CD8-positive, alpha-beta T cell (primary cell): ENCODE measurements at regions of chr3 and their contacts with region 1.

Region 1: GRCh38 chr3:107704477-107704876 is 181.7 kb downstream of the BBX start:
- DNase-seq: no peak
- ATAC-seq: no peak
- H3K4me3 ChIP-seq: no peak overlapping the region
- H3K4me3 Mint-ChIP-seq: no peak overlapping the region
- H3K27ac ChIP-seq: no peak overlapping the region
- H3K27ac Mint-ChIP-seq: peak overlapping the region; percentile 34
- H3K4me1 ChIP-seq: no peaks in the 10 kb centered on the region
- H3K4me1 Mint-ChIP-seq: peaks cover 31% of the 10 kb centered on the region
- H3K27me3 ChIP-seq: no peaks in the 10 kb centered on the region
- H3K27me3 Mint-ChIP-seq: no peaks in the 10 kb centered on the region
- CTCF ChIP-seq: no peak

Region 2: GRCh38 chr3:107690522-107691138 is 13.8 kb before region 1 on chr3:
- CTCF ChIA-PET with region 1: interaction called, 12 read pairs
- POLR2A ChIA-PET with region 1: no interaction called
- intact Hi-C with region 1: no loop called
- DNase-seq: peak in 3 of 9 experiments; percentile 8 to 70 (median 59)
- ATAC-seq: peak; percentile 81
- H3K4me3 ChIP-seq: no peak overlapping the region
- H3K4me3 Mint-ChIP-seq: no peak overlapping the region
- H3K27ac ChIP-seq: no peak overlapping the region
- H3K27ac Mint-ChIP-seq: no peak overlapping the region
- H3K4me1 ChIP-seq: peaks cover 3% of the 10 kb centered on the region
- H3K4me1 Mint-ChIP-seq: peaks cover 23% of the 10 kb centered on the region
- H3K27me3 ChIP-seq: no peaks in the 10 kb centered on the region
- H3K27me3 Mint-ChIP-seq: no peaks in the 10 kb centered on the region
- CTCF ChIP-seq: peak; percentile 71

Region 3: GRCh38 chr3:107999215-107999775 is 294.8 kb after region 1 on chr3:
- CTCF ChIA-PET with region 1: no interaction called
- POLR2A ChIA-PET with region 1: no interaction called
- intact Hi-C with region 1: no loop called
- DNase-seq: no peak
- ATAC-seq: no peak
- H3K4me3 ChIP-seq: no peak overlapping the region
- H3K4me3 Mint-ChIP-seq: no peak overlapping the region
- H3K27ac ChIP-seq: no peak overlapping the region
- H3K27ac Mint-ChIP-seq: no peak overlapping the region
- H3K4me1 ChIP-seq: no peaks in the 10 kb centered on the region
- H3K4me1 Mint-ChIP-seq: no peaks in the 10 kb centered on the region
- H3K27me3 ChIP-seq: no peaks in the 10 kb centered on the region
- H3K27me3 Mint-ChIP-seq: peaks cover 2% of the 10 kb centered on the region
- CTCF ChIP-seq: no peak